ENCODE measurements at regions of chr1 and their contacts with region 1.

Region 1: DNA sequence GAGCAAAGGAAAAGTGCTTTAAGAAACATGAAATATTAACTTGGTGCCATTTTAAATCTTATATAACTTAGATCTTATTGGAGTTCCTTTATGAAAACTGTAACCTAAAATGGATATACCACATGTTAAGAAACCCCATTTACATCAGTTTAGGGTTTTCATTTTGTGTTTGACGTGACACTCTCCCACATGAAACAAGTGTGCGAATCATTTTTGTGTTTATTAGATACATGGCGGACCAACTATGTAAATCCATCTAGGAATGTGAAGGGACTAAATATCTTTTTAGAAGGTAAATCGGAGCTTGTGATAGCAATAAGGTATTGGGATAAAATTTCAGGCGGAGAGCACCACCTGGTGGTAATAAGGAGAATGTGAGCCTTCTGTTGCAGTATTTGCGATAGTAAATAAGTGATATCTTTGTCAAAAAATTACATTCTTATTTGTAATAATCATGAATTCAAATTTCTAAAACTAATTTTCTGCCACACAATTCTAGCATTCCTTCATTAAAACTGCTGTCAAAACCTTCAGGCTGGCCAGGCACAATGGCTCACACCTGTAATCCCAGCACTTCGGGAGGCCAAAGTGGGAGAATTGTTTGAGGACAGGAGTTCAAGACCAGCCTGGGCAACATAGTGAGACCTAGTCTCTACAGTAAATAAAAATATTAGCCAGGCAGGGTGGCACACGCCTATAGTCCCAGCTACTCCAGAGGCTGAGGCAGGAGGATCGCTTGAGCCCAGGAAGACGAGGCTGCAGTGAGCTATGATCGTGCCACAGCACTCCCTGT is 31.3 kb downstream of the SMAP2 start:
- DNase-seq: no peak
- ATAC-seq: no peak
- H3K4me3 Mint-ChIP-seq: peak overlapping the region; percentile 56
- H3K27ac Mint-ChIP-seq: peak overlapping the region; percentile 84
- H3K4me1 Mint-ChIP-seq: peaks cover 62% of the 10 kb centered on the region
- H3K27me3 Mint-ChIP-seq: no peaks in the 10 kb centered on the region
- CTCF ChIP-seq: peak; percentile 86

Region 2: DNA sequence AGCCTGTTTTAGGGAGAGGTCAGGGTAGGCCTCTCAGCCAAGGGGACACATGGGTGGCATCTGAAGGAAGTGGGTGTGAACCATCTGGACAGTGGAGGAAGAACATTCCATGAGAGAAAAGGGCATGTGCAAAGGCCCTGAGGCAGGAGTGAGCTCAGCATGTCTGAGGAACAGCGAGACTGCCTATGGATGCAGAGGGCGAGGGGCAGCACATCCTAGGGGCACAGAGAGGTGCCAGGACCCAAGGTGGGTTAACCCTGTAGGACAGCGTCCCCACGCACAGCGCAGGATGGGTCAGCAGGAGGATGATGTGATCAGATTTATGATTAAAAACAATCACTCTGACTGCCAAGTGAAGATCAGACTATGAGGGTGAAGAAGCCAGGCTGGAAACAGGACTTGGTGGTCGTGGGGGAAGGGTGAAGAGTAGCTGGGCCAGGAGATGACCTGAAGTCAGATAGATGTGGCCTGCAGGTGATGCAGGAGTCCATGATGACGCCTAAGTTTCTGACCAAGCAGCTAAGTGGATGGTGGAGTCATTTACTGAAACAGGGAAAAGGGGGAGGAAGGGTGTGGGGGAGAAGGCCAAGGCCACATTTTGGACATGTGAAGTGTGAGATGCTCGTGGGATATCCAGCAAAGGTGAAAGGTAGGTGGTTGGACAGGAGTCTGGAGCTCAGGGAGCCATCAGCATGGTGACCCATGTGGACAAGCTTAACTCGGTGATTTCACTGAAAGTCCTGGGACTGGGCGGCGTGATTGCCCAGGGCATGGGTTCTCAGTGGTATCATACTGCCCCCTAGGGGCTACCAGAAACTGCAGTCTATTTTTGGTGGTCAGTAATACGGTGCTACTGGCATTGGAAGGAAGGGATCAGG is 866.0 kb before region 1 on chr1:
- CTCF ChIA-PET with region 1: no interaction called
- POLR2A ChIA-PET with region 1: no interaction called
- intact Hi-C with region 1: no loop called
- DNase-seq: peak; percentile 38
- ATAC-seq: peak; percentile 80
- H3K4me3 Mint-ChIP-seq: no peak overlapping the region
- H3K27ac Mint-ChIP-seq: no peak overlapping the region
- H3K4me1 Mint-ChIP-seq: peaks cover 17% of the 10 kb centered on the region
- H3K27me3 Mint-ChIP-seq: no peaks in the 10 kb centered on the region
- CTCF ChIP-seq: no peak

Region 3: DNA sequence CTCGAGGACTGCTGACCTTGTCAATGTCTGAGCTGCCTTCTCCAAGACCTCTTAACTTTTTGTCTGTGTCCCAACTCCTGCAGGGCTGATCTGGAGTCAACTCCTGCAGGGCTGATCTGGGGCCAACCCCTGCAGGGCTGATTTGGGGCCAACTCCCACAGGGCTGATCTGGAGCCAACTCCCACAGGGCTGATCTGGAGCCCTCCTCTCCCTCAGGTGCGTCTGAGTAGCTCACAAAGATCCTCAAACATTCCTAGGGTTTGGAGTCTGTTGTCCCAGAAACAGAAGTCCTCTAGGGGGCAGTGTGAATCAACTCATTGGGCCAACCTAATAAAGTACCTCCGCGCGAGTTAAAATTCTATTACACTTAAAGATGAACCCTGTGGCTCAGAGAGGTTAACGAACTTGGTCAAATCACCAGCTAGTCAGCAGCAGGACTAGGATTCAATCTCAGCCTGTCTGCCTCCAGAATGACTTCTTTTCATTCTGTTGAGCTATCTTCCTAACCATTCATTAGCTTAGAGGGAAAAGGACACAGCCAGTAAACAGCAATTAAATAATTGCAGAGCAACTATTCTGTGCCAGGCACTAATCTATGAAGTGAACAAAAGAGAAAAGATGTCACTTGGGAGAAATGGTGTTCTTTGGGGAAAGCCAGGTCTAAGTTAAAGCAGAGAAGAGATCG is 260.8 kb before region 1 on chr1:
- CTCF ChIA-PET with region 1: interaction called, 33 read pairs
- POLR2A ChIA-PET with region 1: interaction called, 9 read pairs
- intact Hi-C with region 1: loop called (anchors 1 kb)
- DNase-seq: peak; percentile 22
- ATAC-seq: peak; percentile 83
- H3K4me3 Mint-ChIP-seq: no peak overlapping the region
- H3K27ac Mint-ChIP-seq: no peak overlapping the region
- H3K4me1 Mint-ChIP-seq: peaks cover 6% of the 10 kb centered on the region
- H3K27me3 Mint-ChIP-seq: peaks cover 9% of the 10 kb centered on the region
- CTCF ChIP-seq: no peak

Region 4: GRCh38 chr1:40270152-40270834 is 134.6 kb before region 1 on chr1:
- CTCF ChIA-PET with region 1: interaction called, 6 read pairs
- POLR2A ChIA-PET with region 1: no interaction called
- intact Hi-C with region 1: loop called (anchors 5 kb)
- DNase-seq: no peak
- ATAC-seq: no peak
- H3K4me3 Mint-ChIP-seq: no peak overlapping the region
- H3K27ac Mint-ChIP-seq: no peak overlapping the region
- H3K4me1 Mint-ChIP-seq: no peaks in the 10 kb centered on the region
- H3K27me3 Mint-ChIP-seq: no peaks in the 10 kb centered on the region
- CTCF ChIP-seq: no peak

Region 5: DNA sequence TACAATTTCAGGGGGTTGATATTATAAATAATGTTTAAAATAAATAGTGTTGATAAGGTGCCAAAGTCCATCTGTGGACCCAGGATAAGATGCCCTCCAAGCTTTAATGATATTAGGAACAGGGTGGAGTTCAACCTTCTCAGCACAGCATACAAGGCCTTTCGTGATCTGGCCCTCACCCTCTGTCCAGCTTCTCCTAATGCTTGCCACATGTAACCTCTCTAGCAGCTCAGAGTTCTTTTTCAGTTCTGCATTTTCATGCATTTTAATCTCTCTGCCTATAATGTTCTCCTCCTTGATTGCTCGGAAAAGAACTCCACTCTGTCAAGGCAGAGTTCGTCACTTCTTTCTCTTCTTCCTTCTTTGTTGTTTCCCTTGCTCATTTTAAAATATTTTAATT is 52.7 kb before region 1 on chr1:
- CTCF ChIA-PET with region 1: interaction called, 13 read pairs
- POLR2A ChIA-PET with region 1: interaction called, 8 read pairs
- intact Hi-C with region 1: no loop called
- DNase-seq: no peak
- ATAC-seq: peak; percentile 94
- H3K4me3 Mint-ChIP-seq: peak overlapping the region; percentile 65
- H3K27ac Mint-ChIP-seq: peak overlapping the region; percentile 81
- H3K4me1 Mint-ChIP-seq: peaks cover 54% of the 10 kb centered on the region
- H3K27me3 Mint-ChIP-seq: no peaks in the 10 kb centered on the region
- CTCF ChIP-seq: no peak

Region 6: GRCh38 chr1:40373338-40374283 is 31.3 kb before region 1 on chr1 and contains the start of gene SMAP2:
- CTCF ChIA-PET with region 1: interaction called, 19 read pairs
- POLR2A ChIA-PET with region 1: interaction called, 371 read pairs
- intact Hi-C with region 1: loop called (anchors 5 kb)
- DNase-seq: peak; percentile 91
- ATAC-seq: peak; percentile 88
- H3K4me3 Mint-ChIP-seq: peak within 1 kb of the TSS; percentile 97
- H3K27ac Mint-ChIP-seq: peak within 1 kb of the TSS; percentile 96
- H3K4me1 Mint-ChIP-seq: peaks cover 52% of the 10 kb centered on the region
- H3K27me3 Mint-ChIP-seq: no peaks in the 10 kb centered on the region
- CTCF ChIP-seq: no peak
- total RNA-seq, gene SMAP2: 202 and 220 TPM in 2 replicates

Region 7: DNA sequence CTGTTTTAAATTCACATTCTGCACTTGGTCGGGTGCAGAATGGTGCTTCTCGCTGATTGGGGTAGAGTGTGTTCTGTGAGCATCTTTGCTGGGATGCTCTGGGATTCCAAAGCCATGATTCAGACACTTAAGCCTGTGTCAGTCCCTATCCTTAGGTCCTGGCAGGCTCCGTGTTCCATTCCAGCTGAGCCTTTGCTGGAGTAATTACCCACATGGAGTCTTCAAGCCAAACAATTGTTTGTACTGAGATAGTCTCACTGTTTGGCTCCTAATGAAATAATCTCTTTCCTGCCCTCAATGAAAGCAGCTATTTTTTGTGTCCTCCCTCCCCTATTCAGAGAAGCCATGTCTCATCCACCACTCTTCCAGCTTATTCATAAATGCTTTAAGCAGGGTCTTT is 12.6 kb before region 1 on chr1:
- CTCF ChIA-PET with region 1: interaction called, 16 read pairs
- POLR2A ChIA-PET with region 1: interaction called, 371 read pairs
- intact Hi-C with region 1: no loop called
- DNase-seq: no peak
- ATAC-seq: no peak
- H3K4me3 Mint-ChIP-seq: peak overlapping the region; percentile 74
- H3K27ac Mint-ChIP-seq: peak overlapping the region; percentile 90
- H3K4me1 Mint-ChIP-seq: peaks cover 97% of the 10 kb centered on the region
- H3K27me3 Mint-ChIP-seq: no peaks in the 10 kb centered on the region
- CTCF ChIP-seq: no peak

Region 8: GRCh38 chr1:40553017-40553416 is 148.2 kb after region 1 on chr1:
- CTCF ChIA-PET with region 1: no interaction called
- POLR2A ChIA-PET with region 1: no interaction called
- intact Hi-C with region 1: no loop called
- DNase-seq: no peak
- ATAC-seq: no peak
- H3K4me3 Mint-ChIP-seq: no peak overlapping the region
- H3K27ac Mint-ChIP-seq: no peak overlapping the region
- H3K4me1 Mint-ChIP-seq: no peaks in the 10 kb centered on the region
- H3K27me3 Mint-ChIP-seq: peaks cover 1% of the 10 kb centered on the region
- CTCF ChIP-seq: no peak